ENCODE measurements at regions of chrX and their contacts with region 1.

Region 1: DNA sequence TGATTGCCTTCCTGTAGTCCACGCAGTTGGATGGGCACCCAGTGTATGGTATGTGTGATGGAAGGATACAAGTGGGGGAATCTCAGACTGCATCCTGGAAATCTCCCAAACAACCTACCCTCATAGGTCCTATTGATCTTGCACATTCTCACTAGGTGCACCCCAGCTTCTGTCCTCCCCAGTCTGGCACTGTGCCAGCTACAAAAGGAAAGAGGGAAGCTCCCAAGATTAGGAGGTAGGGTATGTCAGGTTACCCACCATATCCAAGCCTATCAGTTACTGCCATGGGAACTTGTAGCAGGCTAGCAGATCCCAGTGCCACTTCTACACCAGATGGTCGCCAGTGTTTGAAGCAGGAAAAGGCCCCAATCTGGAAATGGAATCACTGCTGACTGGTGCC is 11.6 kb downstream of the TBX22 start:
- DNase-seq: no peak
- H3K4me3 ChIP-seq: no peak overlapping the region
- H3K27ac ChIP-seq: no peak overlapping the region
- H3K4me1 ChIP-seq: no peaks in the 10 kb centered on the region
- H3K27me3 ChIP-seq: no peaks in the 10 kb centered on the region
- CTCF ChIP-seq: no peak
- EP300 ChIP-seq: no peak
- POLR2A ChIP-seq: no peak

Region 2: DNA sequence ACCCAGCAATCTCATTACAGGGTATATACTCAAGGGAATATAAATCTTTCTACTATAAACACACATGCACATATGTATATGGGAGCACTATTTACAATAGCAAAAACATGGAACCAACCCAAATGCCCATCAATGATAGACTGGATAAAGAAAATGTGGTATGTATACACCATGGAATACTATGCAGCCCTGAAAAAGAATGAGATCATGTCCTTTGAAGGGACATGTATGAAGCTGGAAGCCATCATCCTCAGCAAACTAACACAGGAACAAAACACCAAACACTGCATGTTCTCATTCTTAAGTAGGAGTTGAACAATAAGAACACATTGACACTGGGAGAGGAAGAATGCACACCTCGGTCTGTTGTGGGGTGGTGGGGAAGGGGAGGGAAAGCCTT is 92.2 kb before region 1 on chrX:
- in situ Hi-C with region 1: no loop called
- intact Hi-C with region 1: no loop called
- DNase-seq: no peak
- H3K4me3 ChIP-seq: no peak overlapping the region
- H3K27ac ChIP-seq: no peak overlapping the region
- H3K4me1 ChIP-seq: no peaks in the 10 kb centered on the region
- H3K27me3 ChIP-seq: no peaks in the 10 kb centered on the region
- CTCF ChIP-seq: no peak
- EP300 ChIP-seq: no peak
- POLR2A ChIP-seq: no peak

Region 3: GRCh38 chrX:80139564-80139963 is 113.5 kb after region 1 on chrX:
- in situ Hi-C with region 1: loop called in 1 of 4 experiments (anchors 25 kb)
- intact Hi-C with region 1: no loop called
- DNase-seq: no peak
- H3K4me3 ChIP-seq: no peak overlapping the region
- H3K27ac ChIP-seq: no peak overlapping the region
- H3K4me1 ChIP-seq: no peaks in the 10 kb centered on the region
- H3K27me3 ChIP-seq: no peaks in the 10 kb centered on the region
- CTCF ChIP-seq: no peak
- EP300 ChIP-seq: no peak
- POLR2A ChIP-seq: no peak

Region 4: DNA sequence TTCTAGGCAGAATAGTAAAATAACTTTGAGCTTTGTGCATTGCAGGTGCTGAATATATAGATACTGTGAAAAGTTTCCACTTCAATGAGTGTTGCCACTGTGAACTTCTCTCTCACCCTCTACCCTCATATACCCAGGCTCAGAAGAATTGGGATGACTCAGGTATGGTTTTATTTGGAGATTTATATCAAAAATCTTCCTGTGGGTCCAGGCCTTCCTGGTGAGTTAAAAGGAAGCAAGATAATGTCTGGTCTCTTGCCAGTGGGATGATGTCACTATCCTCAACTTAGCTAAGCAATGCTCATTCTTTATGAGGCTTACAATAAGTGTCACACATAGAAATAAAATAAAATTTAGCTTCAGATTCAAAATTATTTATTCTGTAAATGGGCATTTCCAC is 240.9 kb after region 1 on chrX:
- in situ Hi-C with region 1: no loop called
- intact Hi-C with region 1: no loop called
- DNase-seq: no peak
- H3K4me3 ChIP-seq: no peak overlapping the region
- H3K27ac ChIP-seq: no peak overlapping the region
- H3K4me1 ChIP-seq: no peaks in the 10 kb centered on the region
- H3K27me3 ChIP-seq: no peaks in the 10 kb centered on the region
- CTCF ChIP-seq: no peak
- EP300 ChIP-seq: no peak
- POLR2A ChIP-seq: no peak